Heart right ventricle (tissue), 16 donors: ENCODE measurements at regions of chr15 and their contacts with region 1.

Region 1: GRCh38 chr15:31128919-31129768 is 27.6 kb upstream of the TRPM1 start:
- DNase-seq: peak; percentile 67 to 80
- ATAC-seq: peak; percentile 70 to 94 (median 84)
- H3K4me3 ChIP-seq: peak overlapping the region in 1 of 10 donors; percentile 20
- H3K27ac ChIP-seq: no peak overlapping the region
- H3K4me1 ChIP-seq: peaks cover 0 to 10% (median 6%) of the 10 kb centered on the region in 9 donors
- H3K27me3 ChIP-seq: peaks cover 0 to 5% (median 0%) of the 10 kb centered on the region in 7 donors
- CTCF ChIP-seq: peak; percentile 89 to 100 (median 94)

Region 2: DNA sequence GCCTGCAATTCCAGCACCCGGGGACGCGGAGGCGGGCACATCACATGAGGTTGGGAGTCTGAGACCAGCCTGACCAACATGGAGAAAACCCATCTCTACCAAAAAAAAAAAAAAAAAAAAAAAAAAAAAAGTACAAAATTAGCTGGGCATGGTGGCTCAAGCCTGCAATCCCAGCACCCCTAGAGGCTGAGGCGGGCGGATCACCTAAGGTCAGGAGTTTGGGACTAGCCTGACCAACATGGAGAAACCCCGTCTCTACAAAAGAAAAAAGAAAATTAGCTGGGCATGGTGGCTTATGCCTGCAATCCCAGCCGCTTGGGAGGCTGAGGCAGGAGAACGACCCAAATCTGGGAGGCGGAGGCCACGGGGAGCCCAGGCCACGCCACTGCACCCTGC is 232.9 kb before region 1 on chr15:
- intact Hi-C with region 1: loop called in 3 of 10 experiments (anchors 10 kb)
- DNase-seq: no peak
- ATAC-seq: no peak
- H3K4me3 ChIP-seq: no peak overlapping the region
- H3K27ac ChIP-seq: no peak overlapping the region
- H3K4me1 ChIP-seq: no peaks in the 10 kb centered on the region
- H3K27me3 ChIP-seq: no peaks in the 10 kb centered on the region
- CTCF ChIP-seq: no peak

Region 3: DNA sequence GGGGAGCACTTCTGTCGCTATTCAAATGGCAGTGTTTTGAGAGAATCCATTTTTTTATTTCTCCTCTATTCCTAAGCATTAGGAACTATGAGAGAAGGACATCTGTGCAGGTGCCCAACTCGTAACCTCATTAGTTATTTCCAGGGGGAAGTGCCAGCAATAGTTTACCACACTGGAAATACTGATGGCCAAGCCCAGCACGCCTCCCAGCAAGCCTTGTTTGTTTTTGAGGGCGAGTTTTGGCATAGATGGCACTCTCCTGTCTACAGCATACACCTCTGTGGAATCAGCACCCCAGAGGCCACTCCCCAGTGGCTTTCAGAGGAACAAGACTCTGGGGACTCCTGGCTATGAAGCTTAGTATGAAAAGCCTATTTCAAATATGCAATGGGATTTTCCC is 188.8 kb before region 1 on chr15:
- intact Hi-C with region 1: loop called in 1 of 10 experiments (anchors 10 kb)
- DNase-seq: no peak
- ATAC-seq: no peak
- H3K4me3 ChIP-seq: no peak overlapping the region
- H3K27ac ChIP-seq: peak overlapping the region in 1 of 10 donors; percentile 24
- H3K4me1 ChIP-seq: no peaks in the 10 kb centered on the region
- H3K27me3 ChIP-seq: no peaks in the 10 kb centered on the region
- CTCF ChIP-seq: no peak

Region 4: GRCh38 chr15:30979457-30979856 is 149.7 kb before region 1 on chr15:
- intact Hi-C with region 1: loop called in 1 of 10 experiments (anchors 10 kb)
- DNase-seq: no peak
- ATAC-seq: peak in 2 of 8 donors; percentile 39 to 50
- H3K4me3 ChIP-seq: no peak overlapping the region
- H3K27ac ChIP-seq: peak overlapping the region in 1 of 10 donors; percentile 65
- H3K4me1 ChIP-seq: peaks cover 0 to 64% (median 55%) of the 10 kb centered on the region in 9 donors
- H3K27me3 ChIP-seq: no peaks in the 10 kb centered on the region
- CTCF ChIP-seq: no peak

Region 5: GRCh38 chr15:31223478-31224350 is 94.6 kb after region 1 on chr15:
- intact Hi-C with region 1: no loop called
- DNase-seq: peak; percentile 17 to 36
- ATAC-seq: peak; percentile 35 to 62 (median 54)
- H3K4me3 ChIP-seq: peak overlapping the region in 8 of 10 donors; percentile 6 to 43 (median 36)
- H3K27ac ChIP-seq: peak overlapping the region in 9 of 10 donors; percentile 10 to 82 (median 53)
- H3K4me1 ChIP-seq: peaks cover 0 to 60% (median 32%) of the 10 kb centered on the region in 9 donors
- H3K27me3 ChIP-seq: no peaks in the 10 kb centered on the region
- CTCF ChIP-seq: peak in 1 of 9 donors; percentile 24

Region 6: GRCh38 chr15:31402511-31403056 is 273.4 kb after region 1 on chr15:
- intact Hi-C with region 1: no loop called
- DNase-seq: peak; percentile 75 to 76
- ATAC-seq: peak; percentile 62 to 86 (median 78)
- H3K4me3 ChIP-seq: no peak overlapping the region
- H3K27ac ChIP-seq: peak overlapping the region; percentile 24 to 73 (median 66)
- H3K4me1 ChIP-seq: peaks cover 12 to 58% (median 26%) of the 10 kb centered on the region in 9 donors
- H3K27me3 ChIP-seq: no peaks in the 10 kb centered on the region
- CTCF ChIP-seq: no peak